Natural killer cell (primary cell): ENCODE measurements at regions of chr1 and their contacts with region 1.

Region 1: DNA sequence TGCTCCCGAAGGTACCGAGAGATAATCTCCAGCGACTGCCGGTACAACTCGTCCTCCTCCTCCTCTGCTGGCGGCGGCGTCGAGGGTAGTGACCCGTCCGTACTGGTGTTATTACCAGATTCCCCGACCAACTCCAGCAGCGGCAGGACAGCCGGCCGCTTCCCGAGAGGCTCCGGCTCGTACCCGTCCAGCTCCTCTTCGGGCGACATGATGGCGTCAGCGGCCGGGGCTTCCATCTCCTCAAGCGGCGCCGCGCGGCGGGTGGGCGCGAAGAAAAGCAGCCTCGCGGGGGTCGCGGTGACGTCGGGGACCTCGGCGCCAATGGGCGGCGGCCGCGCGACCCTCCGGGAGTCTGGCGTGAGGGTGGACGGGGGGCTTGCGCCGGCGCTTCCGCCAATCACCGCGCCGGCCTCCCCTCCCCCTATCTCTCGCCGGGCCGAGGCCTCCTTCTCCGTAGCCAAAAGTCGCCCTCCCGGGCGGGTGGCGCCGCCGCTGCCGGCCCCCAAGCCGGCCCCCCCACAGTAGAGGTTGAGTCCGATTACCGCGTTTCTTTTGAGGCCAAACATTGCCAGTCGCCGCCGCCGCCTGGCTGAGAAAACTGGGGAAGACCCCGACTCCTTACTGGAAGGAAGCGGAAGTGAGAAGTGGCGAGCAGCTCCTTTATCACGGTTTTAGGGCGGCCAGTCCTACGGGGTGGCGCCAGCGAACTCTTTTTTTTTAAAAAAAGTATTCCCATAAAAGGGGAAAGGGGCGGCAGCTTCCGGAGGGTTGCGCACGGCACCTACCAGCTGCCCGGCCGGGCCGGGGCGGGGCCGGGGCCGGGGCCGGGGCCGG is at the start of gene MCL1:
- DNase-seq: peak; percentile 88 to 93
- ATAC-seq: peak; percentile 80 to 95 (median 83)
- H3K4me3 ChIP-seq: peak within 1 kb of the TSS; percentile 79
- H3K4me3 Mint-ChIP-seq: peak within 1 kb of the TSS; percentile 100
- H3K27ac ChIP-seq: peak within 1 kb of the TSS; percentile 100
- H3K27ac Mint-ChIP-seq: peak within 1 kb of the TSS; percentile 96 to 99
- H3K4me1 ChIP-seq: peaks cover 16% of the 10 kb centered on the region
- H3K4me1 Mint-ChIP-seq: peaks cover 57 to 59% of the 10 kb centered on the region in 2 donors
- H3K27me3 ChIP-seq: no peaks in the 10 kb centered on the region
- H3K27me3 Mint-ChIP-seq: no peaks in the 10 kb centered on the region
- CTCF ChIP-seq: no peak
- total RNA-seq, gene MCL1: 929 to 1,396 (median 938) TPM

Region 2: GRCh38 chr1:150596095-150596892 is 17.1 kb after region 1 on chr1:
- intact Hi-C with region 1: no loop called
- DNase-seq: no peak
- ATAC-seq: no peak
- H3K4me3 ChIP-seq: no peak overlapping the region
- H3K4me3 Mint-ChIP-seq: no peak overlapping the region
- H3K27ac ChIP-seq: no peak overlapping the region
- H3K27ac Mint-ChIP-seq: no peak overlapping the region
- H3K4me1 ChIP-seq: no peaks in the 10 kb centered on the region
- H3K4me1 Mint-ChIP-seq: peaks cover 0 to 6% of the 10 kb centered on the region in 2 donors
- H3K27me3 ChIP-seq: no peaks in the 10 kb centered on the region
- H3K27me3 Mint-ChIP-seq: no peaks in the 10 kb centered on the region
- CTCF ChIP-seq: no peak

Region 3: GRCh38 chr1:150613061-150613920 is 34.1 kb after region 1 on chr1:
- intact Hi-C with region 1: loop called (anchors 1 kb)
- DNase-seq: peak; percentile 27 to 81
- ATAC-seq: peak; percentile 19 to 64 (median 42)
- H3K4me3 ChIP-seq: no peak overlapping the region
- H3K4me3 Mint-ChIP-seq: peak overlapping the region; percentile 33
- H3K27ac ChIP-seq: peak overlapping the region; percentile 98
- H3K27ac Mint-ChIP-seq: peak overlapping the region; percentile 90 to 91
- H3K4me1 ChIP-seq: peaks cover 42% of the 10 kb centered on the region
- H3K4me1 Mint-ChIP-seq: peaks cover 40 to 48% of the 10 kb centered on the region in 2 donors
- H3K27me3 ChIP-seq: no peaks in the 10 kb centered on the region
- H3K27me3 Mint-ChIP-seq: no peaks in the 10 kb centered on the region
- CTCF ChIP-seq: no peak

Region 4: DNA sequence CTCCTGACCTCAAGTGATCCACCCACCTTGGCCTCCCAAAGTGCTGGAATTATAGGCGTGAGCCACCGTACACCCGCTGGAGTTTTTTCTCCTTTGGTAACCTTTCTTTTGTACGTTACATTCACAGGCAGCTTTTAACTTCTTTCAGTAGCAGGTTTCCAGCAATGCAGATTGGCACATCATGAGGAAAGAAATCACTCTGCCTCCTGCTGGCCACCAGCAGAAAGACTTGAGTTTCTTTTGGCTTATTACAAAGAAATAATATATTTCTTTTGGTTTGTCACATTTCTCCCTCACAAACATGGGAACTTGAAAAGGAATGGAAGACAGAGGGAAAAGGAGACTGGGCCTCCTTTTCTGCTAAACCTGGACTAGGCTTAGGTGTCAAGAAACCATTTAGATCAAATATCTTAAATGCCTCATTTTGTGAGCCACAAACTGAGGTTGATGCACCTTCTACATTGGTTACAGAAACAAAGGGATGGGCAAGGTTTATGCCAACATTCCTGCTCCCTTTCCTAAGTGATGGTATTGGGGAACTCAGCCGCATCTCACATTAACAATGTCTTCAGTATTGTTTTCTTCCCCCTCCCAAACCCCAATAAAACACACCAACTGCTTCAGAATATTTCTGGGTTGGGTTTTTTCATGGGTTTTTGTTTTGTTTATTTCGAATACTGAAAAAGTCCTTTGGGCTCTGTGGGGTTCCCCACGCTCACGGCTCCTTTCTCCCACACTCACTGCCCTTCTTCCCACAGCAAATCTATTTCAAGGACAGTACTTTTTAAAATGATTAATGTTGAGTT is 42.5 kb after region 1 on chr1:
- intact Hi-C with region 1: loop called (anchors 2 kb)
- DNase-seq: peak; percentile 39 to 85
- ATAC-seq: peak; percentile 62 to 87 (median 78)
- H3K4me3 ChIP-seq: no peak overlapping the region
- H3K4me3 Mint-ChIP-seq: no peak overlapping the region
- H3K27ac ChIP-seq: peak overlapping the region; percentile 61
- H3K27ac Mint-ChIP-seq: peak overlapping the region; percentile 86 to 89
- H3K4me1 ChIP-seq: peaks cover 4% of the 10 kb centered on the region
- H3K4me1 Mint-ChIP-seq: peaks cover 15 to 26% of the 10 kb centered on the region in 2 donors
- H3K27me3 ChIP-seq: no peaks in the 10 kb centered on the region
- H3K27me3 Mint-ChIP-seq: no peaks in the 10 kb centered on the region
- CTCF ChIP-seq: peak; percentile 71